ENCODE measurements at regions of chr12 and their contacts with region 1.

Region 1: DNA sequence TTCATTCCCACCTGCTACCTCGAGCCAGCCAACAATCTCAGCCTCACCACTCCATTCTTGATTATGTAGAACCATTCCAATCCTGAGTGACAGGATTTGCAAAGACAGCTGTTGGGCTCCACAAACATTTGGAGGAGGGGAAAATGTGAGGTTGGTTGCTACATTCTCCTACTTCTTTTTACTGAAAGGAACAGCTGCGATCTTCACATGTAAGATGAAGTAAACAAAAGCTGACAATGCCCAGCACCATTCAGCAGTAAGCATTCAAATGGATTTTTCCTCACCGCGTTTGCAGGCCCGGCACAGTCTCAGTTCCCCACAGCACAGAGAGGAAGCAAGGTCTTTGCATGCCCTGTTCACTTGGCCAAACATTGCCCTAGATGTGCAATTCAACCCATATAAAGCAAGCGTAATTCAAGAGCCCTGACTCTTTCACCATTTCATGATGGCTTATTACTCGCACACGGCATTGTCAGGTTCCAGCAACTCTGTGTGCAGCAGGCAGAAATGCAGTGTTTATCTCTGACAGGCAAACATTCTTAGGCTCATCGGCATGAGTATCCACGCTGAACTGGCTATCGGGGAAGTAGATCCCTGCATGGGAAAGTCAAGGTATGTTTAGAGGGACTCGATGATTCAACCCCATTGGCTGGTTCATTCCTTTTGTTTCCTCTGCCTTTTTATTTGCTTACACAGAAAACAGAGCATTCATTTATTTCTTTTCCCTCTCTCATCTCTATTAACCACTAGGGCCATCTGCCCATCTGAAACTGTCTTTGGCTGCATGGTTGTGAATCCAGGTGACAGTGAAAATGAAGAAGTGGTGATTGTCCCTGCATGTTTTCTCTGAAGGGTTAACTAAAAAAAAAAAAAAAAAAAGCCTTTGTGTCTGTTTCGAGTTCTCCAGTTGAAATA is 236.1 kb upstream of the PLEKHG7 start:
- DNase-seq: peak; percentile 87
- ATAC-seq: peak; percentile 76
- H3K4me3 ChIP-seq: peak overlapping the region; percentile 61 to 93 (median 68)
- H3K4me3 Mint-ChIP-seq: peak overlapping the region; percentile 94
- H3K27ac ChIP-seq: peak overlapping the region; percentile 85 to 93
- H3K27ac Mint-ChIP-seq: peak overlapping the region; percentile 95
- H3K4me1 ChIP-seq: peaks cover 80 to 83% of the 10 kb centered on the region in 2 donors
- H3K4me1 Mint-ChIP-seq: peaks cover 81% of the 10 kb centered on the region
- H3K27me3 ChIP-seq: no peaks in the 10 kb centered on the region
- H3K27me3 Mint-ChIP-seq: no peaks in the 10 kb centered on the region
- CTCF ChIP-seq: no peak

Region 2: GRCh38 chr12:92478692-92479091 is 12.0 kb after region 1 on chr12:
- CTCF ChIA-PET with region 1: interaction called, 3 read pairs
- POLR2A ChIA-PET with region 1: no interaction called
- intact Hi-C with region 1: loop called (anchors 1 kb)
- DNase-seq: no peak
- ATAC-seq: peak; percentile 14
- H3K4me3 ChIP-seq: no peak overlapping the region
- H3K4me3 Mint-ChIP-seq: peak overlapping the region; percentile 42
- H3K27ac ChIP-seq: peak overlapping the region in 1 of 2 donors; percentile 65
- H3K27ac Mint-ChIP-seq: peak overlapping the region; percentile 87
- H3K4me1 ChIP-seq: peaks cover 55 to 82% of the 10 kb centered on the region in 2 donors
- H3K4me1 Mint-ChIP-seq: peaks cover 82% of the 10 kb centered on the region
- H3K27me3 ChIP-seq: no peaks in the 10 kb centered on the region
- H3K27me3 Mint-ChIP-seq: no peaks in the 10 kb centered on the region
- CTCF ChIP-seq: no peak

Region 3: DNA sequence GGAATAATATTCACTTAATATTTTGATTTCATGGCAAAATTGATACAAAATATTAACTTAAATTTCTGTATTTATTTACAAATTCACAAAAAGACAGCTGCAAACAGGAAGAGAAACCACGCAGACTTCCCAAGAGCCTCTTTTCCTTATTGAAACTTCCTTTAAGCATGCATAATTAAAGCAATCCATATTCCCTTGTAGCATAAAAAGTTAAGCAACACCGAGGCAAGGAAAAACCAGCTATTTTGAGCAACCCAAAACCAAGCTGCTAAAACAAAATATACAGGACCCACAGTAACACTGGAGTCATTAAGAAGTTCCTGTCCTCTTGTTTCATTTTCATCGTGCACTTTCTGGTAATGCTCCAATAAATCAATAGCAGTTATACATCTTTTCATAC is 404.5 kb after region 1 on chr12:
- CTCF ChIA-PET with region 1: no interaction called
- POLR2A ChIA-PET with region 1: no interaction called
- intact Hi-C with region 1: no loop called
- DNase-seq: no peak
- ATAC-seq: no peak
- H3K4me3 ChIP-seq: no peak overlapping the region
- H3K4me3 Mint-ChIP-seq: no peak overlapping the region
- H3K27ac ChIP-seq: no peak overlapping the region
- H3K27ac Mint-ChIP-seq: no peak overlapping the region
- H3K4me1 ChIP-seq: no peaks in the 10 kb centered on the region
- H3K4me1 Mint-ChIP-seq: peaks cover 17% of the 10 kb centered on the region
- H3K27me3 ChIP-seq: no peaks in the 10 kb centered on the region
- H3K27me3 Mint-ChIP-seq: no peaks in the 10 kb centered on the region
- CTCF ChIP-seq: no peak